Dendritic cell treated with granulocyte-macrophage colony-stimulating factor and Interleukin-4, amounts not matched to agents 40 ng/mL and 50 ng/mL, for 4 days (primary cell): ENCODE measurements at regions of chr12 and their contacts with region 1.

Region 1: DNA sequence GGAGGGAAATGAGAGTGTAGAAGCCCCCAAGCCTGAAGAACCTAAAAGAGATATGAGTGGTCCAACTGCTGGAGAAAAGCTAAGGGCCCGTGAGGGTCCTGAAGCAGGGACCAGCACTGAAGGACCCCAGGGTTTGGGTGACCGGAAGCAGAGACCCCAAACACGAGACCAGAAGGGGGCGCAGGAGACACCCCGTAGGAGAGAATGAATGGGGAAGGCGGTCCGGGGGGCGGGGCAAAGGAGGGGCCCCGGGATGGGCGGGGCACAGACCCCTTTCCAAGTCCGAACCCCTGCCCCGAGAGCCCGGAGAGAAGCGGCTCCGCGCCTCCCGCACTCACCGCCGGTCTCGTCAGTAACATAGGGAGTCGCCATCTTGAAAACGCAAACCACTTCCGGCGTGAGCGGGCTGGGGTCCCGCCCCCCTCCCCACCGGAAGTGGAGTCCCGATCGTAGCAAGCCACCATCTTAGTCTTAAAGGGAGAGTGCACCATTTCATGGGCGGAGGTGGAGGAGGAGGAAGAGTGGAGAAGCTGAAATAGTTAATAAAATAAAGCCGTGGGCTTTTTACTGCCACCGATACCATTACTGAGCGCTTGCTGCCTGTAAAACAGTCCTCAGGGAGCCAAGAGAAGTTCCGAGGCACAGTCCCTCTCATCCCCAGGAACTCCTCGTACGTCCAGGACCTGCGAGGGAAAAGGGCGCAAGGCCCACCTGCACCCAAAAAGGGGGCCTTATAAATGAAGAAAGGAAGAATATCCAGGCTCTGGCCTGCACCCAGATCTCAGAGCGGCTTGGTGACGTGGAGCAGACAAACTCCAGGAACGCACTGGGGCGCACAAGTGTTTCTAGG is 731 bp downstream of the PYM1 start:
- H3K4me3 Mint-ChIP-seq: peak overlapping the region; percentile 95
- H3K27ac Mint-ChIP-seq: peak overlapping the region; percentile 99
- H3K4me1 Mint-ChIP-seq: peaks cover 71% of the 10 kb centered on the region
- H3K27me3 Mint-ChIP-seq: no peaks in the 10 kb centered on the region

Region 2: GRCh38 chr12:55817346-55818139 is 109.4 kb before region 1 on chr12 and contains the starts of genes ORMDL2 and SARNP:
- intact Hi-C with region 1: loop called (anchors 1 kb)
- H3K4me3 Mint-ChIP-seq: no peak within 1 kb of the TSS
- H3K27ac Mint-ChIP-seq: no peak within 1 kb of the TSS
- H3K4me1 Mint-ChIP-seq: peaks cover 35% of the 10 kb centered on the region
- H3K27me3 Mint-ChIP-seq: no peaks in the 10 kb centered on the region

Region 3: GRCh38 chr12:55829967-55830600 is 96.9 kb before region 1 on chr12:
- intact Hi-C with region 1: loop called (anchors 1 kb)
- H3K4me3 Mint-ChIP-seq: peak overlapping the region; percentile 98
- H3K27ac Mint-ChIP-seq: peak overlapping the region; percentile 98
- H3K4me1 Mint-ChIP-seq: peaks cover 77% of the 10 kb centered on the region
- H3K27me3 Mint-ChIP-seq: no peaks in the 10 kb centered on the region

Region 4: DNA sequence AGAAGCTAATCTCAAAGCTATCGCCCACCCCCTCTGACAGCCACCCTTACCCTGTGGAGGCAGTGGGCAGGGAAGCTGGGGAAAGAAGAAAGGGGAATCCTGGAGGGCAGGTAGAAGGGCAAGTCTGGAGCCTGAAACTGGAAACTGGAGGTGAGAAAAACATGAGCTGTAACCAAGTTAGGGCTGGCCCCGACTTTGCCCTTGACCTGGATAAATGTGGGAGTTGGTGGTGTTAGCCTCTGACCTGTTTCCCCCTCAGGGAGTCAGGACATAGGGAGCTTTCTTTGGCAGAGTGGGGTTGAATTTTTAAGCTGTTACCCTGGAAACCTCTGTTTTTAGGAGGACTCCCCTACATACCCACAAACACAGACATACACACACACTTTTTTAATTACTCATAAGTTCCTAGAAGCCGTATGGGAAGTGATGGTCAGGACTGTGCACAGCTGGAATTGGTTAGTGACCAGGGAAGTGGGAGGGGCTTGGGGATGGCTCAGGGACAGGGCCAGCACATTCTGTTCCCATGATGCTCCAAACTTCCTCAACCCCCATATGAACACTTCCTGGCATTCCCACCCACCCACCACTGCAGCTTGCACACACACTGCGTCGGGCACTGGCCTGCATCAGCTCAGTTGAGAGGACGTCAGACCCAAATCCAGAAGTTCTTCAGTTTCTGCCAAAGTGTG is 79.2 kb before region 1 on chr12:
- intact Hi-C with region 1: loop called (anchors 2 kb)
- H3K4me3 Mint-ChIP-seq: peak overlapping the region; percentile 32
- H3K27ac Mint-ChIP-seq: peak overlapping the region; percentile 99
- H3K4me1 Mint-ChIP-seq: peaks cover 73% of the 10 kb centered on the region
- H3K27me3 Mint-ChIP-seq: no peaks in the 10 kb centered on the region

Region 5: GRCh38 chr12:55940065-55940732 is 13.2 kb after region 1 on chr12:
- intact Hi-C with region 1: loop called (anchors 2 kb)
- H3K4me3 Mint-ChIP-seq: no peak overlapping the region
- H3K27ac Mint-ChIP-seq: no peak overlapping the region
- H3K4me1 Mint-ChIP-seq: peaks cover 19% of the 10 kb centered on the region
- H3K27me3 Mint-ChIP-seq: no peaks in the 10 kb centered on the region

Region 6: DNA sequence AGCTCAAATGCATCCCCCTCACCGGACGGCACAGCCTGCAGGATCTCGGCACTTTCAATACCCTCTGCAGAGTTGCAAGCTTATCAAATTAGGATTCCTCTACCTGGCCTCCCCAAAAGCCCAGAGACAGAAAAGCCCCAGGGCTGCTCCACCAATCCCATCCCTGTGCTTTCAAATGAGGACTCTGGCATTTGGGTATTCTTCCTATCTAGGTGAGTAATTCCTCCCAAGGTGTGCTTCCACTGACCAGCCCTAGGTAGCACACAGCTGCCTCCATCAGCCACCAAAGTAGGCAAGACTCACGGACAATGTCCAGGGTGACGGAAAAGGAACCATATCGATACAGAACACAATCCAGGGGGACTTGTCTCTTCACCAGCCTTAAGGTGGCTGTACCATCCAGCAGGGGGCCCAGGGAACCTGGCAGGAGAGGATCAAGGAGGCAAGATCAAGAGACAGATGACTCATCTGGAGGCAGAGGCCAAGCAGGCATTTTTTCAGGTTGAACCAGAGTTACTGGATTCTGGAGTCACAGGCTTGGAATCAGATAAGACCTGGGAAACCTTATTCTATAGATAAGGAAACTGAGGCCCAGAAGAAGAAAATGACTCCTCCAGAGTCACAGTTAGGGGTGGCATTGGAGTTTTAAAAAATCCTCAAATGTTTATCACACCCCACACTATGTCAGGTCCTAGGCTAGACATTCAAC is 29.0 kb after region 1 on chr12:
- intact Hi-C with region 1: no loop called
- H3K4me3 Mint-ChIP-seq: no peak overlapping the region
- H3K27ac Mint-ChIP-seq: no peak overlapping the region
- H3K4me1 Mint-ChIP-seq: peaks cover 11% of the 10 kb centered on the region
- H3K27me3 Mint-ChIP-seq: peaks cover 2% of the 10 kb centered on the region